ENCODE measurements at regions of chr5 and their contacts with region 1.

Region 1: GRCh38 chr5:39547553-39548154 is 122.9 kb upstream of the DAB2 start:
- DNase-seq: peak in 1 of 2 donors; percentile 11
- ATAC-seq: peak; percentile 64 to 65
- H3K4me3 ChIP-seq: peak overlapping the region in 1 of 4 donors; percentile 7
- H3K27ac ChIP-seq: no peak overlapping the region
- H3K4me1 ChIP-seq: peaks cover 0 to under 1% of the 10 kb centered on the region in 2 donors
- H3K27me3 ChIP-seq: no peaks in the 10 kb centered on the region
- CTCF ChIP-seq: peak; percentile 16 to 76 (median 61)
- POLR2A ChIP-seq: no peak

Region 2: GRCh38 chr5:39376293-39376714 is 171.3 kb before region 1 on chr5:
- in situ Hi-C with region 1: loop called (anchors 5 to 25 kb)
- intact Hi-C with region 1: loop called (anchors 1 kb)
- DNase-seq: no peak
- ATAC-seq: peak in 1 of 2 donors; percentile 58
- H3K4me3 ChIP-seq: no peak overlapping the region
- H3K27ac ChIP-seq: no peak overlapping the region
- H3K4me1 ChIP-seq: no peaks in the 10 kb centered on the region
- H3K27me3 ChIP-seq: no peaks in the 10 kb centered on the region
- CTCF ChIP-seq: peak; percentile 45 to 72 (median 53)
- POLR2A ChIP-seq: no peak